ENCODE measurements at regions of chr15 and their contacts with region 1.

Region 1: DNA sequence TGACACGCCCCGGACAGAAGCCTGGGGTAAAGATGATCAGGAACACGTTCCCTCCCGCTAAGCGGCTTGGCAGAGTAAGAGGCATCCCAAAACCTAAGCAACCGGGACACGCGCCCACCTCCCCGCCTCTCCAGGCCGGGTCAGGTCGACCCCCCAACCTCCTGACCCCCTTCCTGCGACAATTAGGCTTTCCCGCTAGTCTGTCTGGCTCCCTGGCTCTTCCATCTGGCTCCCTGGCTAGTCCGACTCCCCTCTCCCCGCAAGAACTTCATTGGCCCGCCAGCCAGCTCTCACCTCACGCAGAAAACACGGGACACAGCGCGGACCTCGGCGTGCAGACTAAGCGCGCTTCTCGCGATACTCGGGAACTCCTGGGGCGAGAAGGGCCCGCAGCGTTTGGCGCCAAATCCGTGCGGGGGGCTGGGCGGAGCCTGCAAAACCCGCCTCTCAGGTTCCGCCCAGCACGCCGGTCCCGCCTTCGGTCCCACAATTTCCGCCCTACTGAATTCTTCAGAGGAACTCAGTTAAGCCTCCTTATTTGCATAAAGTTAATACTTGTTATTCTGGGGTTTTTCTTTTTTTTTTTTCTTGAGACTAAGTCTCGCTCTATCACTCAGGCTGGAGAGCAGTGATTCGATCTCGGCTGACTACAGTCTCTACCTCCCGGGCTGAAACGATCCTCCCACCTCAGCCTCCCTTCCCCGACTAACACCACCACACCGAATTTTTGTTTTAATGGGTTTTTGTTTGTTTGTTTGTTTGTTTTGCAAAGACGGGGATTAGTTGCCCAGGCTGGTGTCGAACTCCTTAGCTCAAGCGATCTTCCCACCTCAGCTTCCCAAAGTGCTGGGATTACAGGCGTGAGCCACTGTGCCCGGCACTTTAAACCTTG is at the start of gene TIPIN:
- DNase-seq: peak; percentile 98 to 99 (median 98)
- ATAC-seq: peak; percentile 99 to 100
- H3K4me3 ChIP-seq: peak within 1 kb of the TSS; percentile 42
- H3K27ac ChIP-seq: peak within 1 kb of the TSS; percentile 20
- H3K4me1 ChIP-seq: no peaks in the 10 kb centered on the region
- H3K27me3 ChIP-seq: no peaks in the 10 kb centered on the region
- total RNA-seq, gene TIPIN: 3.2 to 7.4 (median 3.6) TPM

Region 2: GRCh38 chr15:66411190-66411589 is 54.6 kb after region 1 on chr15:
- intact Hi-C with region 1: loop called in 1 of 4 experiments (anchors 10 kb)
- DNase-seq: no peak
- ATAC-seq: no peak
- H3K4me3 ChIP-seq: no peak overlapping the region
- H3K27ac ChIP-seq: no peak overlapping the region
- H3K4me1 ChIP-seq: peaks cover 9% of the 10 kb centered on the region
- H3K27me3 ChIP-seq: no peaks in the 10 kb centered on the region

Region 3: DNA sequence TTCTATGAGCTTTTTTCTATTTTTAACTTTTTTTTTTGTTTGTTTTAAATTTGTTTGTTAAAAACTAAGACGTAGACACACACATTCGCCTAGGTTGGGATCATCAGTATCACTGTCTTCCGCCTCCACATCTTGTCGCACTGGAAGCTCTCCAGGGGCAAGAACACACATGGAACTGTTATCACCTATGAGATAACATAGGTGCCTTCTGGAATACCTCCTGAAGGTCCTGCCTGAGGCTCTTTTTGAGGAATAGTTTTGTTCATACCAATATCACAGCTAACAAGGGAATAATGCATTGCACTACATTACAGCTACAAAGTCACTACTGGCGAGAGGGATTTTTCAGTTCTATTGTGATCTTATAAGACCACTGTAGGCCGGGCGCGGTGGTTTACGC is 178.4 kb after region 1 on chr15:
- intact Hi-C with region 1: no loop called
- DNase-seq: no peak
- ATAC-seq: no peak
- H3K4me3 ChIP-seq: no peak overlapping the region
- H3K27ac ChIP-seq: no peak overlapping the region
- H3K4me1 ChIP-seq: no peaks in the 10 kb centered on the region
- H3K27me3 ChIP-seq: no peaks in the 10 kb centered on the region